ENCODE measurements at regions of chr12 and their contacts with region 1.

Region 1: GRCh38 chr12:113120670-113121370 is 14.7 kb downstream of the RASAL1 start:
- DNase-seq: peak; percentile 88
- H3K4me3 ChIP-seq: peak overlapping the region; percentile 6
- H3K27ac ChIP-seq: peak overlapping the region; percentile 82
- H3K4me1 ChIP-seq: peaks cover 57% of the 10 kb centered on the region
- CTCF ChIP-seq: peak; percentile 25; the same call in 1 of the 2 replicates

Region 2: DNA sequence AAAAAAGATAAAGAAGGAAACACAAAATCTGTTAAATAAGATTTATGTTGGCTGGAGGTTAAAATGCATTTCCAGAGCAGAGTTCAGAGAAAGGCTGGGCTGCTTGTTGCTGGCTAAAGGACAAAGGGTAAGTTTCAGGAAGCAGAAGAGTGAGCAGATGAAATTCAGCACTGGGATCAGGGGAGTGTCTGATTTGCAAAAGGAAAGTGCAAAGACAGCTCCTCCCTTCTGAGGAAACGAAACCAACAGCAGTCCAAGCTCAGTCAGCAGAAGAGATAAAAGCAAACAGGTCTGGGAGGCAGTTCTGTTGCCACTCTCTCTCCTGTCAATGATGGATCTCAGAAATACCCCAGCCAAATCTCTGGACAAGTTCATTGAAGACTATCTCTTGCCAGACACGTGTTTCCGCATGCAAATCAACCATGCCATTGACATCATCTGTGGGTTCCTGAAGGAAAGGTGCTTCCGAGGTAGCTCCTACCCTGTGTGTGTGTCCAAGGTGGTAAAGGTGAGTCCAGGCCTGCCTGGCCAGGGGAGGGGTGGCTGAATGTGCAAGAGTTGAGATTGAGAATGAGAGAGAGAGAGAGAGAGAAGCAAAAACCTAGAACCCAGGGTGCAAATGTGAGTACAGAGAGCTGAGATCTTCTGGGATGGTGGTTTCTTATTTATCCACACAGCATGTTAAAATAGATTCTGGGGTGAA is 214.0 kb before region 1 on chr12 and contains the start of gene OAS1:
- CTCF ChIA-PET with region 1: no interaction called
- POLR2A ChIA-PET with region 1: no interaction called
- intact Hi-C with region 1: loop called (anchors 10 kb)
- DNase-seq: peak; percentile 80
- H3K4me3 ChIP-seq: peak within 1 kb of the TSS; percentile 71
- H3K27ac ChIP-seq: peak within 1 kb of the TSS; percentile 85
- H3K4me1 ChIP-seq: peaks cover 66% of the 10 kb centered on the region
- CTCF ChIP-seq: no peak
- total RNA-seq, gene OAS1: 40.3 and 49.6 TPM in 2 replicates

Region 3: GRCh38 chr12:113135178-113136127 is 14.6 kb after region 1 on chr12 and contains the start of gene RASAL1:
- CTCF ChIA-PET with region 1: interaction called, 4 read pairs
- POLR2A ChIA-PET with region 1: interaction called, 10 read pairs
- intact Hi-C with region 1: no loop called
- DNase-seq: peak; percentile 93
- H3K4me3 ChIP-seq: peak within 1 kb of the TSS; percentile 90
- H3K27ac ChIP-seq: peak within 1 kb of the TSS; percentile 68
- H3K4me1 ChIP-seq: peaks cover 68% of the 10 kb centered on the region
- CTCF ChIP-seq: peak; percentile 78
- total RNA-seq, gene RASAL1: 69.1 and 89.1 TPM in 2 replicates

Measured in OCI-LY7 (cell line).